GM12878 (cell line): ENCODE measurements at regions of chr6 and their contacts with region 1.

Region 1: GRCh38 chr6:140043336-140043735 is 668.9 kb upstream of the CITED2 start:
- DNase-seq: no peak
- ATAC-seq: no peak
- H3K4me3 ChIP-seq: no peak overlapping the region
- H3K27ac ChIP-seq: no peak overlapping the region
- H3K4me1 ChIP-seq: no peaks in the 10 kb centered on the region
- H3K27me3 ChIP-seq: no peaks in the 10 kb centered on the region
- CTCF ChIP-seq: no peak
- EP300 ChIP-seq: no peak
- POLR2A ChIP-seq: no peak
- RAD21 ChIP-seq: no peak

Region 2: GRCh38 chr6:139392794-139393193 is 650.5 kb before region 1 on chr6:
- CTCF ChIA-PET with region 1: interaction called, 3 read pairs
- POLR2A ChIA-PET with region 1: interaction called, 13 read pairs
- RAD21 ChIA-PET with region 1: no interaction called
- SMC1A ChIA-PET with region 1: no interaction called
- in situ Hi-C with region 1: no loop called
- intact Hi-C with region 1: no loop called
- DNase-seq: peak; percentile 38
- ATAC-seq: peak; percentile 98
- H3K4me3 ChIP-seq: no peak overlapping the region
- H3K27ac ChIP-seq: no peak overlapping the region
- H3K4me1 ChIP-seq: no peaks in the 10 kb centered on the region
- H3K27me3 ChIP-seq: no peaks in the 10 kb centered on the region
- CTCF ChIP-seq: no peak
- EP300 ChIP-seq: peak in 1 of 2 experiments; percentile 86; a peak in 1 of 4 replicates
- POLR2A ChIP-seq: no peak
- RAD21 ChIP-seq: no peak

Region 3: DNA sequence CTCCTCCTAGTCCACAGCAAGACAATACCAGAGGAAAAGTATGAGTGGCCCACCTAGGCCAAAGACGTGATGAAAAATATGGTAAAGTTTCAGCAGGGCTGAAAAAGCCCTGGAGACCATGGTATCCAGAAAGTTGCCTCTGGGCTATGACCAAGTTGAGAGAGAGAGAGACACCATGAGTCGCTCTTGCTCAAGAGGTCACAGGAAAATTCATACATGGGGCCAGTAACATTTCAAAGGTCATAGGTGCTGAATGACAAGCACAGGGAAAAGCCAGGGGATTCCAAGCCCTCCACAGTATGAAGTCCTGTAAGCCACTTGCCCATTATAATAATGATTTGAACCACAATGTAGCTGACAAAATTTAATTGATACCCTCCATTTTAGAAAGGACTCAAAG is 11.2 kb before region 1 on chr6:
- CTCF ChIA-PET with region 1: interaction called, 3 read pairs
- POLR2A ChIA-PET with region 1: no interaction called
- RAD21 ChIA-PET with region 1: no interaction called
- SMC1A ChIA-PET with region 1: interaction called, 10 read pairs
- in situ Hi-C with region 1: no loop called
- intact Hi-C with region 1: no loop called
- DNase-seq: no peak
- ATAC-seq: no peak
- H3K4me3 ChIP-seq: no peak overlapping the region
- H3K27ac ChIP-seq: no peak overlapping the region
- H3K4me1 ChIP-seq: no peaks in the 10 kb centered on the region
- H3K27me3 ChIP-seq: no peaks in the 10 kb centered on the region; a peak in 1 of 4 replicates
- CTCF ChIP-seq: no peak
- EP300 ChIP-seq: no peak
- POLR2A ChIP-seq: no peak
- RAD21 ChIP-seq: no peak